Activated B cell treated with CpG ODN at 0.5 μM for 24 hours (primary cell): ENCODE measurements at regions of chr7 and their contacts with region 1.

Region 1: GRCh38 chr7:55572378-55573233 is at the start of gene VOPP1:
- DNase-seq: peak; percentile 79
- ATAC-seq: peak; percentile 63
- H3K4me3 Mint-ChIP-seq: peak within 1 kb of the TSS; percentile 97
- H3K27ac Mint-ChIP-seq: peak within 1 kb of the TSS; percentile 93
- H3K4me1 Mint-ChIP-seq: peaks cover 49% of the 10 kb centered on the region
- H3K27me3 Mint-ChIP-seq: no peaks in the 10 kb centered on the region
- CTCF ChIP-seq: no peak
- total RNA-seq, gene VOPP1: 403 and 438 TPM in 2 replicates

Region 2: GRCh38 chr7:55280031-55280454 is 292.6 kb before region 1 on chr7:
- CTCF ChIA-PET with region 1: no interaction called
- POLR2A ChIA-PET with region 1: no interaction called
- intact Hi-C with region 1: no loop called
- DNase-seq: no peak
- ATAC-seq: peak; percentile 69
- H3K4me3 Mint-ChIP-seq: no peak overlapping the region
- H3K27ac Mint-ChIP-seq: no peak overlapping the region
- H3K4me1 Mint-ChIP-seq: no peaks in the 10 kb centered on the region
- H3K27me3 Mint-ChIP-seq: no peaks in the 10 kb centered on the region
- CTCF ChIP-seq: no peak

Region 3: GRCh38 chr7:55490099-55490498 is 82.5 kb before region 1 on chr7:
- CTCF ChIA-PET with region 1: no interaction called
- POLR2A ChIA-PET with region 1: interaction called, 11 read pairs
- intact Hi-C with region 1: no loop called
- DNase-seq: no peak
- ATAC-seq: no peak
- H3K4me3 Mint-ChIP-seq: no peak overlapping the region
- H3K27ac Mint-ChIP-seq: peak overlapping the region; percentile 53
- H3K4me1 Mint-ChIP-seq: peaks cover 14% of the 10 kb centered on the region
- H3K27me3 Mint-ChIP-seq: no peaks in the 10 kb centered on the region
- CTCF ChIP-seq: no peak

Region 4: GRCh38 chr7:55515569-55516279 is 56.9 kb before region 1 on chr7:
- CTCF ChIA-PET with region 1: no interaction called
- POLR2A ChIA-PET with region 1: interaction called, 36 read pairs
- intact Hi-C with region 1: no loop called
- DNase-seq: no peak
- ATAC-seq: peak; percentile 21
- H3K4me3 Mint-ChIP-seq: peak overlapping the region; percentile 66
- H3K27ac Mint-ChIP-seq: peak overlapping the region; percentile 85
- H3K4me1 Mint-ChIP-seq: peaks cover 95% of the 10 kb centered on the region
- H3K27me3 Mint-ChIP-seq: no peaks in the 10 kb centered on the region
- CTCF ChIP-seq: no peak

Region 5: GRCh38 chr7:55588379-55588699 is 15.7 kb after region 1 on chr7:
- CTCF ChIA-PET with region 1: interaction called, 7 read pairs
- POLR2A ChIA-PET with region 1: interaction called, 6 read pairs
- intact Hi-C with region 1: loop called (anchors 2 kb)
- DNase-seq: no peak
- ATAC-seq: no peak
- H3K4me3 Mint-ChIP-seq: no peak overlapping the region
- H3K27ac Mint-ChIP-seq: no peak overlapping the region
- H3K4me1 Mint-ChIP-seq: peaks cover 34% of the 10 kb centered on the region
- H3K27me3 Mint-ChIP-seq: no peaks in the 10 kb centered on the region
- CTCF ChIP-seq: no peak